ENCODE measurements at regions of chr9 and their contacts with region 1.

Region 1: GRCh38 chr9:69672596-69673310 is 582 bp upstream of the APBA1 start:
- DNase-seq: peak; percentile 83
- H3K4me3 ChIP-seq: peak overlapping the region; percentile 77
- H3K27ac ChIP-seq: peak overlapping the region; percentile 81
- H3K4me1 ChIP-seq: no peaks in the 10 kb centered on the region
- H3K27me3 ChIP-seq: no peaks in the 10 kb centered on the region
- CTCF ChIP-seq: peak; percentile 74

Region 2: DNA sequence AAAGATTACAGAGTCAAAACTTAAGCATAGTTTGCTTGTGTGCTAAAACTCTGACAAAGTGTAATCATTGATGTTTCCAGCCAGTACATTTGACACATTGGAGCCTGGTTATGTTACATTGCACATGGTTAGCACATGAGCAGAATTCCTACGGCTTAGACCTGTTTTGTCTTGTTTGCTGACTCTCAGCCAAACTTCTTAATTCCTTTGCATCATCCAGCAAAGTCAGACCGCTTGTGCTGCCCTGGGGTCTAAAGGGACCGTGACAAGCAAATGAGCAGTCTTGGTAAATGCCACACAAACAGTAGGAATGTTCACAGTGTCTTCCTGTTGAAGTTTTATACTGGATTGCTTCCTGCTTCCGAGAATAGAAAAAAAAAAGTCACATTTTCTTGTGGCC is 419.7 kb before region 1 on chr9:
- intact Hi-C with region 1: no loop called
- DNase-seq: no peak
- H3K4me3 ChIP-seq: no peak overlapping the region
- H3K27ac ChIP-seq: no peak overlapping the region
- H3K4me1 ChIP-seq: no peaks in the 10 kb centered on the region
- H3K27me3 ChIP-seq: no peaks in the 10 kb centered on the region
- CTCF ChIP-seq: no peak

Region 3: GRCh38 chr9:69759421-69760277 is 86.9 kb after region 1 on chr9 and contains the start of gene PTAR1:
- intact Hi-C with region 1: loop called (anchors 5 kb)
- DNase-seq: peak; percentile 93
- H3K4me3 ChIP-seq: peak within 1 kb of the TSS; percentile 86
- H3K27ac ChIP-seq: peak within 1 kb of the TSS; percentile 92
- H3K4me1 ChIP-seq: no peaks in the 10 kb centered on the region
- H3K27me3 ChIP-seq: no peaks in the 10 kb centered on the region
- CTCF ChIP-seq: no peak
- total RNA-seq, gene PTAR1: 45.3 to 64.4 TPM

Region 4: GRCh38 chr9:69877854-69878514 is 205.2 kb after region 1 on chr9:
- intact Hi-C with region 1: loop called (anchors 5 kb)
- DNase-seq: no peak
- H3K4me3 ChIP-seq: no peak overlapping the region
- H3K27ac ChIP-seq: no peak overlapping the region
- H3K4me1 ChIP-seq: no peaks in the 10 kb centered on the region
- H3K27me3 ChIP-seq: no peaks in the 10 kb centered on the region
- CTCF ChIP-seq: peak; percentile 44

Measured in colonic mucosa (tissue), 4 donors.